Gastrocnemius medialis (tissue), 4 donors: ENCODE measurements at regions of chr5 and their contacts with region 1.

Region 1: DNA sequence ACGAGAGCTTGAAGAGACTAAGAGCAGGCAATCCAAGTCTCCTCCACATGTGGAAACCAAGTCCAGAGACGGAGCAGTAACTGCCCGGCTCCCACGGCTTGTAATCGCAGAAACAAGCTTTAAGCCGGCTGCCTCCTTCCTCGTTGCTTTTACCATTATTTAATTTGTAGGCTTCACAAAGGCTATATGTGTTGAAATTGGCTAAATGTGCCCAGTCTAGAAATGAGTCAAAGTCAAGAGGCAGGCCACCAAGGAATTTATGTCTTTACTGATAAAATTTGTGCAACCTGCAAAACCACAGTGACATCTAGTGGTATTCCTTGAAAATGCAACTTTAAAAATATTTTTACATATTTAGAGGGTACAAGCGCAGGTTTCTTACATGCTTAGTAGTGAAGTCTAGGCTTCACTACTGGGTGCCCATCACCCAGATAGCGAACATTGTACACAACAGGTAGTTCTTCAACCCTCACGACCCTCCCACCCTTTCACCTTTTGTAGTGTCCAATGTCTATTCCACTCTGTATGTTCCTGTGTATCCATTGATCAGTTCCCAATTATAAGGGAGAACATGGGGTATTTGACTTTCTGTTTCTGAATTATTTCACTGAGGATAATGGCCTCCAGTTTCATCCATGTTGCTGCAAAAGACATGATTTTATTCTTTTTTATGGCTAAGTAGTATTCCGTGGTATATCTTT is 33.5 kb upstream of the EBF1 start:
- DNase-seq: no peak
- ATAC-seq: peak; percentile 53 to 68
- H3K4me3 ChIP-seq: no peak overlapping the region
- H3K27ac ChIP-seq: no peak overlapping the region
- H3K4me1 ChIP-seq: no peaks in the 10 kb centered on the region
- H3K27me3 ChIP-seq: no peaks in the 10 kb centered on the region
- CTCF ChIP-seq: peak; percentile 47 to 82 (median 63)
- POLR2A ChIP-seq: no peak

Region 2: DNA sequence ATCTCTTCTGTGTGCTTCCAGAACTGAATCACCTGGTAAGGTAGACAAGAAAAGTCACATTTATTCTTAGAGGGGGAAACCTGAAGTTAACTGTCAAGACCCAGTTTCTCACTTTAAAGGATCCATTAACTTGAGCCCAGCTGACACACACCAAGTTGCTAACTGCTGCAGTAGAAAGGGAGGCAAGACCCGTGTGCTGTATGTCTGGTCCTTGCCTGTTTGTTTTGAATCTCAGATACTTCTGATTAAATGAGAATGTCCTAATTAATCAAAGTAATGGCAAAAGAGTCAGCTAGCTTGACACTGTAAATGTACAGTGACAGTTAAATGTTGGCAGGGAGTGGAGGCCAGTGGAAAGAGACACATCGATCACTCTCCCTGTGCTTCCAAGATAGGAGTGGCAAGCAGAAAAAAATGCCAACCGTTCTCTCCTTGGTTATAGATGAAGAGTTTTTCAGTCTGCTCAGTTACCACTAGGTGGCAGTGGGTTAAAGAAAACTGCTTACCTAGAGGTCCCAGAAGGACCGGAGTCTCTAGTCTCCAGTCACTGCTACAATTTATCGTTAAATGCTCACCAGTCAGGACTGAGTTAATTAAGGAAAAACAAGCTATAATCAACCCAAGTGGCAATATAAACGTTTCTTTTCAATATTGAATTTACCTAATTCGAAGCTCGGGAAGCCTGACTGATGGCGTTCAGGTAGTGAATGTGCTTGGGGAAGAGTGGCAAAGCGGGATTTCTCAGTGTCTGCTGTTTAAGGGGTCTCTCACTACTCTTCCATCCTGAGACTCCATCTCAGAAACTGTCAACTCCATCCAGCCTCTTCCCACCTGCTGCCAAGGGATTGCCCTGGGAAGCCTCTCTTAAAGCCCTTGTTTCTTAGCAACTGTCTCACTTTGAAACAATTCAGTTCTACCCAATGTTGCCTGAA is 1371.2 kb before region 1 on chr5:
- in situ Hi-C with region 1: loop called in 1 of 4 experiments (anchors 25 kb)
- intact Hi-C with region 1: loop called (anchors 2 kb)
- DNase-seq: no peak
- ATAC-seq: peak; percentile 86 to 94
- H3K4me3 ChIP-seq: no peak overlapping the region
- H3K27ac ChIP-seq: no peak overlapping the region
- H3K4me1 ChIP-seq: no peaks in the 10 kb centered on the region
- H3K27me3 ChIP-seq: no peaks in the 10 kb centered on the region
- CTCF ChIP-seq: peak; percentile 53 to 73 (median 62)
- POLR2A ChIP-seq: no peak

Region 3: DNA sequence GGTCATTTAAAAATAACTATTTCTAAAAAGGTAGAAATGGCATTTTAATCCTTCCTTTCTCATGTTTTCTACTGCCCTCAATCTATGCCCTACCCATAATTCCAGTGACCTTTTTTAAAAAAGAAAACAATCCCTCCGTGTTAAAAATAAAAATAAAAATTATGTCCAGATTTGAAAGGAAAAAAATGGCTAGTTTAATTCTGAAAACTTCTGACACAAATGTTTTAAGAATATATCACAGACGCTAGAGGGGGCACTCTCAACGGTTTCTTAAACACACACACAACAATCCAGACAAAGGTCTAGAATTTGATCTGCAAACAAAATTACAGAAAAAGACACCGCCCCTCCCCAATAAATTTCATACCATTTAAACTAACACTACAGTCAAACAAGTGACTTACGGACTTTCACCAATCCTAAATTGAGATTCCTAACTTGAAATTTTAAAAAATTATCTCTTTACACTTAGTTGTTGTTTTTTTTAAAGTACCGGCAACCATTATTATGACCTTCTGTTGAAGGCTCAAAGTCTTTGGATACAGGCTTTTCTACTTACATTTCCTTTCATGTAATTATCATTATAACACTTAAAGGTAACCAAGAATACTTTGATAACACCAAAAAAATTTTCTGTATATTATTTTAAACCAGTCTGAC is 1312.5 kb before region 1 on chr5:
- in situ Hi-C with region 1: loop called in 1 of 4 experiments (anchors 25 kb)
- intact Hi-C with region 1: no loop called
- DNase-seq: no peak
- ATAC-seq: no peak
- H3K4me3 ChIP-seq: no peak overlapping the region
- H3K27ac ChIP-seq: peak overlapping the region; percentile 39 to 55 (median 46)
- H3K4me1 ChIP-seq: peaks cover 34 to 41% of the 10 kb centered on the region in 2 donors
- H3K27me3 ChIP-seq: no peaks in the 10 kb centered on the region
- CTCF ChIP-seq: peak in 3 of 5 experiments; percentile 28 to 54 (median 44)
- POLR2A ChIP-seq: no peak

Region 4: DNA sequence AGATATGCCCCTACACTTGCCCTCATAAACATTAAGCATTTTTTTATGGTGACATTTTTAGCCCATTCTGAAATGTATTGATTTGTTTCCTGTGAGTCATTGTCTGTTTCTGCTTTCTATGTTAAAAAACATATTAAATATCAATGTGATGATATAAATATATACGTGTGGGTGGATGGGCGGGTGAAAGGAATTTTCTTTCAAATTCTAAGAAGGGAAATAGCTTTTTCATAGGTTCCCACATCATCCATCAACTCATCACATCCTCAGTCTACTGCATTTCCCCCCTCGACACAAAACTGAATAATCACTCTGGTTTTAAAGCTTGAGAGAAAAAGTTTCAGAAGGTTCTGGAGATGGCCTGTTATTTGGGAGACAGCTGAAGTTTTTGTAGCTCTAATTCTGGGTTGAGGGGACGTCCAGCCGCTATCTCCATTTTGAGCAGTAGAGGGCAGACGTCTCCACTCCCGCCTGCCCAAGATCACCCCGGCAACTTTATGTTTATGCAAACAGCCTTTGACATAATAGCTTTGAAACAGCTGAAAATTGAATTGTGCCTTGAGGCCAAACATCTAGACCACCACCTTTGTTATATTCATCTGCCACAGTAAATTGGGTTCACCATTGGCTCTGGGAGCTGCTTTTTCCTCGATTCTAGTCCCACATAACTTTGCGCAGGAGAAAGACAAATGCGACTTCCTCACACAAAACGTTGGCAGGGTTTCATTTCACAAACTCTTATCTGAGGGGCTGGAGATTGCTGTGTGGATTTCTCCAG is 1058.0 kb before region 1 on chr5:
- in situ Hi-C with region 1: loop called in 1 of 4 experiments (anchors 25 kb)
- intact Hi-C with region 1: loop called (anchors 2 kb)
- DNase-seq: peak; percentile 6 to 29
- ATAC-seq: peak; percentile 19 to 62
- H3K4me3 ChIP-seq: peak overlapping the region in 3 of 4 donors; percentile 15 to 31 (median 21)
- H3K27ac ChIP-seq: peak overlapping the region in 2 of 4 donors; percentile 9 to 21
- H3K4me1 ChIP-seq: no peaks in the 10 kb centered on the region
- H3K27me3 ChIP-seq: peaks cover 0 to 3% (median 0%) of the 10 kb centered on the region in 3 donors
- CTCF ChIP-seq: peak in 4 of 5 experiments; percentile 39 to 70 (median 60)
- POLR2A ChIP-seq: no peak

Region 5: DNA sequence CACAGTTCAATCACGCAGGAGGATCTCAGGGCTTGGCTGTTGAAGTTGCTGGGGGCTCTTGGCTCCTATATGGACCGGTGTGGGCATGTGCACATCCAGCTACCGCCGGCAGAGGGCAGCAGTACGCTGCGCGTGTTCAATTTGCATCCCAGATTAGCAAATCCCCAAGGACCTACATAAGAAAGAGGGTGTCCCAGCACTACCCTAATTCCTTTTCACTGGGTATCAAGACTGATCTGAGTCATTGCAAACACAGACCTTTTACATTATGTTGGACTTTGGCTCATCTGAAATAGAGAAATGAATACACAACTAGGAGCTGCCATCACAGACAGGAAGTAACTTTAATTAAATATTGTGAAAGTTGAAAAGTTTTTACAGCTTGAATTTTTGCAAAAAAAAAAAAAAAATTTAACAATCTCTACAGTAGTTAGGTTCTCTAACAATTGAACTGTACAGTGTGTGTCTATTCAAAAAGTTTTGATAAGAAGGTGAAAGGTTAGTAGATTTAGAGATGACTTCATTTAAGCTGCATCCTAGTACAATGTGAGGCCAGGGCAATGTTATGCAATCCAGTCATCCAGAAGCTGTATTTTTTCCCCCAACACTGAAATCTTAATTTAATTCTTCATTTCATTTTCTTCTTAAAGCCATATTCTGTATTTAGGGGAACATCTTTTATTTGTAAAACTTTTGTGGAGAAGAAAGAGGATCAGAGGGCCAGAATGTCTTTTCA is 437.4 kb before region 1 on chr5:
- in situ Hi-C with region 1: no loop called
- intact Hi-C with region 1: loop called (anchors 1 kb)
- DNase-seq: peak; percentile 32 to 49
- ATAC-seq: peak; percentile 67 to 73
- H3K4me3 ChIP-seq: no peak overlapping the region
- H3K27ac ChIP-seq: peak overlapping the region in 1 of 4 donors; percentile 23
- H3K4me1 ChIP-seq: peaks cover under 1 to 1% of the 10 kb centered on the region in 2 donors
- H3K27me3 ChIP-seq: no peaks in the 10 kb centered on the region
- CTCF ChIP-seq: peak; percentile 87 to 96 (median 89)
- POLR2A ChIP-seq: no peak

Region 6: GRCh38 chr5:158979749-158980521 is 153.3 kb before region 1 on chr5:
- in situ Hi-C with region 1: no loop called
- intact Hi-C with region 1: no loop called
- DNase-seq: peak; percentile 36 to 45
- ATAC-seq: peak; percentile 71 to 82
- H3K4me3 ChIP-seq: peak overlapping the region; percentile 17 to 46 (median 32)
- H3K27ac ChIP-seq: peak overlapping the region; percentile 20 to 62 (median 50)
- H3K4me1 ChIP-seq: peaks cover 7 to 31% of the 10 kb centered on the region in 2 donors
- H3K27me3 ChIP-seq: no peaks in the 10 kb centered on the region
- CTCF ChIP-seq: no peak
- POLR2A ChIP-seq: no peak

Region 7: GRCh38 chr5:159106569-159107282 is 26.5 kb before region 1 on chr5:
- in situ Hi-C with region 1: no loop called
- intact Hi-C with region 1: no loop called
- DNase-seq: peak in 1 of 2 donors; percentile 40
- ATAC-seq: peak; percentile 71 to 75
- H3K4me3 ChIP-seq: peak overlapping the region; percentile 30 to 53 (median 42)
- H3K27ac ChIP-seq: peak overlapping the region in 1 of 4 donors; percentile 29
- H3K4me1 ChIP-seq: no peaks in the 10 kb centered on the region
- H3K27me3 ChIP-seq: peaks cover 34 to 50% (median 39%) of the 10 kb centered on the region in 3 donors
- CTCF ChIP-seq: peak; percentile 76 to 85 (median 82)
- POLR2A ChIP-seq: no peak